Left ventricle myocardium superior (tissue), 1 donor: ENCODE measurements at regions of chr12 and their contacts with region 1.

Region 1: GRCh38 chr12:68317047-68317667 is 15.0 kb downstream of the MDM1 start:
- DNase-seq: no peak
- ATAC-seq: no peak

Region 2: GRCh38 chr12:68223083-68223747 is 93.9 kb before region 1 on chr12:
- intact Hi-C with region 1: loop called (anchors 5 kb)
- DNase-seq: peak; percentile 69
- ATAC-seq: peak; percentile 98

Region 3: GRCh38 chr12:68236421-68237059 is 80.6 kb before region 1 on chr12:
- intact Hi-C with region 1: loop called (anchors 5 kb)
- DNase-seq: no peak
- ATAC-seq: peak; percentile 64